ENCODE measurements at regions of chr6 and their contacts with region 1.

Region 1: DNA sequence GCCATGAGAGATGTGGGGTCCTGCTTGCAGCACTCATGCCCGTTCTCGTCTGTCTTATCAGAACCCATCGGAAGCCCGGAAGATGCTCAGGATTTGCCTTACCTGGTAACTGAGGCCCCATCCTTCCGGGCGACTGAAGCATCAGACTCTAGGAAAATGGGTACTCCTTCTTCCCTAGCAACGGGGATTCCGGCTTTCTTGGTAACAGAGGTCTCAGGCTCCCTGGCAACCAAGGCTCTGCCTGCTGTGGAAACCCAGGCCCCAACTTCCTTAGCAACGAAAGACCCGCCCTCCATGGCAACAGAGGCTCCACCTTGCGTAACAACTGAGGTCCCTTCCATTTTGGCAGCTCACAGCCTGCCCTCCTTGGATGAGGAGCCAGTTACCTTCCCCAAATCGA is 8.3 kb downstream of the PI16 start:
- DNase-seq: peak; percentile 83

Region 2: GRCh38 chr6:36907781-36908180 is 55.1 kb before region 1 on chr6:
- intact Hi-C with region 1: loop called (anchors 5 kb)
- DNase-seq: peak; percentile 78

Region 3: DNA sequence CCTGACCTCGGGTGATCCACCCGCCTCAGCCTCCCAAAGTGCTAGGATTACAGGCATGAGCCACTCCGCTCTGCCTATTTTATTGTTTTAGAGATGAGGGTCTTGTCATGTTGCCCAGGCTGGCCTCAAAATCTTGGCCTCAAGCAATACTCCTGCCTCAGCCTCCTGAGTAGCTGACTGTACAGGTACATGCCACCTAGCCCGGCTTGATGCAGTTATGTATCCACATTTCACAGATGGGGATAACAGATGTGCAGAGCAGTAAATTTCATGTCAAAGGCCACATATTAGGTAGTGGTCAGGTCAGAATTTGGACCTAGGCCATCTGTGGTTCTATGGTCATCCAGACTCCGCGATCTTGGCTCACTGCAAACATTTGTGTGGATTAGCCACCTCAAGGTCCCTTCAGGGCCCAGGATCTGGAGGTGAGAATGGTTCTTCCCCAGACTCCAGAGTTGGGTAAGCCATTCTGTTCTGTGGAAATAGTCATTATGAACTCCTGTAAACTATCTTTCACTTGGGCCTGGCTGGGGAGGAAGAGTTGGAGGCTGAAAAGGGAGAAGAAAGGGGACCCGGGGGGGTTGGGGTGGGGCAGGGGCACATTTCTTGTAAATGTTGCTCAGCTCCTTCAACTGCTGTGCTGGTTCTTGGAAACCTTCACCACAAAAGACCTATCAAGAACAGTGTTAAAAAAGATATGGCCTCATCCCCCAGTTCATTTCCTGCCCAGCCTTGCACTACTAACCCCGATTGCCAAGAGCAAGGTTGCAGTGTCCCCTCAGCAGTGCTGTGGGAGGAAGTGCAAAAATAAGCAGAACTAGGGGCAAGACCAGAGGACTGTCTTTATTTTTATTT is 220.1 kb after region 1 on chr6:
- intact Hi-C with region 1: no loop called
- DNase-seq: no peak

Region 4: GRCh38 chr6:37277001-37277409 is 314.1 kb after region 1 on chr6:
- intact Hi-C with region 1: no loop called
- DNase-seq: no peak

Measured in cardiac septum (tissue), 1 donor.